ENCODE measurements at regions of chr1 and their contacts with region 1.

Region 1: GRCh38 chr1:63322114-63322943 is at the start of gene FOXD3:
- DNase-seq: peak; percentile 25
- H3K4me3 ChIP-seq: peak within 1 kb of the TSS; percentile 25 to 51 (median 45)
- H3K27ac ChIP-seq: no peak within 1 kb of the TSS
- H3K4me1 ChIP-seq: peaks cover 20% of the 10 kb centered on the region
- H3K27me3 ChIP-seq: peaks cover 86% of the 10 kb centered on the region
- CTCF ChIP-seq: no peak
- total RNA-seq, gene FOXD3: not detected

Region 2: DNA sequence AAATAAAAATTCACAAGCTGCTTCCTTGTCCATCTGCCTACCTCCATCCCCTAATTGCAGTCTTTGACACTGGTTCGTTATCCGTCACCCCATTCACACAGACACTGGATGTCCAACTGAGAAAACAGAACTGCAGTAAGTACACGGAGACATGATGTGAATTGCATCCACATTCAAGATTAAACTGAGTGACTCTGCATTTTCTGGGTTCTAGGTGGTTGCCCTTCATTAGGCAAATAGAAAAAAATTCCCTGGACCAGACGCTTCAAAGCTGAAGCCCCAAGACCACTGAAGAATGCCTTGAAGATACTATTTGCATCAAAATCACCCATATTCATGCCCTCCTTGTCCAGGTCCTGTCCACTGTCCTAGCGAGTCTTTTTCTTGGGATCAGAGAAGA is 37.2 kb after region 1 on chr1:
- CTCF ChIA-PET with region 1: no interaction called
- dilution Hi-C with region 1: no loop called
- in situ Hi-C with region 1: no loop called
- intact Hi-C with region 1: no loop called
- DNase-seq: no peak
- H3K4me3 ChIP-seq: no peak overlapping the region
- H3K27ac ChIP-seq: no peak overlapping the region
- H3K4me1 ChIP-seq: no peaks in the 10 kb centered on the region
- H3K27me3 ChIP-seq: peaks cover 5% of the 10 kb centered on the region
- CTCF ChIP-seq: no peak

Region 3: GRCh38 chr1:64421377-64421776 is 1099.0 kb after region 1 on chr1:
- CTCF ChIA-PET with region 1: interaction called, 25 read pairs
- dilution Hi-C with region 1: no loop called
- in situ Hi-C with region 1: no loop called
- intact Hi-C with region 1: no loop called
- DNase-seq: peak; percentile 15
- H3K4me3 ChIP-seq: no peak overlapping the region
- H3K27ac ChIP-seq: no peak overlapping the region
- H3K4me1 ChIP-seq: no peaks in the 10 kb centered on the region
- H3K27me3 ChIP-seq: peaks cover 3% of the 10 kb centered on the region
- CTCF ChIP-seq: no peak